ENCODE measurements at regions of chr9 and their contacts with region 1.

Region 1: DNA sequence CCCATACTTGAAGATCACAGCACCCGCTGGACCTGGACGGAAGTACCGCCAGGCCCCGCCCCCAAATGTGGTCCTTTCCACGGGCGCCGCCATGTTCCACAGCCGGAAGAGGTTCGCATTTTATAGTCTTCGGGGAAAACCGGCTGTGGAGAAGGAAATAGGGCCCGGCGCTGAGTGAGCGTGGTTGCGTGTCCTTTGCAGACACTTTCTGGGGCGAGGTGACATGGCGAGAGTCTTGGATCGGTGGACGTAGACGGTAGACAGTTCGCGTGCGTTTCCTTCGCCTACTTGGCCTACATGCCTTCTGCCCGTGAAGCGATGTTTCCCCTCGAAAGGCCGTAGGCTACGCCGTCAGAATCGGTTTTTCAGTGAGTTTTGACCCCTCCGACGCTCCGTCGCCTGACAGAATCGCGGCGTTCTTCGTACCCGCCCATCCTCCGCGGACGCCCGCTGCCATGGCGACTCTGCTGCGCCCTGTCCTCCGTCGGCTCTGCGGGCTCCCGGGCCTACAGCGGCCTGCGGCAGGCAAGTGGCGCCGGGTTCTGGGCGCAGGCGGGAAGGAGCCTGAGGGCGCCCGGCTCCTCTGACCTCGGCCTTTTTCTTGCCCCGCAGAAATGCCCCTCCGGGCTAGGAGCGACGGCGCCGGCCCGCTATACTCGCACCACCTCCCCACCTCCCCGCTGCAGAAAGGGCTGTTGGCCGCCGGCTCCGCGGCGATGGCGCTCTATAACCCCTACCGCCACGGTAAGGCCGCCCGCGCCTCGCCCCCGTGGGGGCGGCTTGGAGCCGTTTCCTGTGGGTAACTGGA is at the starts of genes COQ4 and TRUB2:
- H3K4me3 Mint-ChIP-seq: peak within 1 kb of the TSS; percentile 86
- H3K27ac Mint-ChIP-seq: peak within 1 kb of the TSS; percentile 90
- H3K4me1 Mint-ChIP-seq: peaks cover 7% of the 10 kb centered on the region
- H3K27me3 Mint-ChIP-seq: no peaks in the 10 kb centered on the region

Region 2: GRCh38 chr9:128275996-128276573 is 46.5 kb before region 1 on chr9 and contains the starts of genes GOLGA2 and SWI5:
- intact Hi-C with region 1: loop called (anchors 1 kb)
- H3K4me3 Mint-ChIP-seq: peak within 1 kb of the TSS; percentile 96
- H3K27ac Mint-ChIP-seq: peak within 1 kb of the TSS; percentile 96
- H3K4me1 Mint-ChIP-seq: peaks cover 51% of the 10 kb centered on the region
- H3K27me3 Mint-ChIP-seq: no peaks in the 10 kb centered on the region

Region 3: GRCh38 chr9:128339771-128340690 is 17.4 kb after region 1 on chr9 and contains the start of gene SLC27A4:
- intact Hi-C with region 1: loop called (anchors 1 kb)
- H3K4me3 Mint-ChIP-seq: peak within 1 kb of the TSS; percentile 94
- H3K27ac Mint-ChIP-seq: peak within 1 kb of the TSS; percentile 89
- H3K4me1 Mint-ChIP-seq: peaks cover 7% of the 10 kb centered on the region
- H3K27me3 Mint-ChIP-seq: no peaks in the 10 kb centered on the region

Region 4: GRCh38 chr9:128370826-128371621 is 48.4 kb after region 1 on chr9 and contains the start of gene URM1:
- intact Hi-C with region 1: loop called (anchors 1 kb)
- H3K4me3 Mint-ChIP-seq: peak within 1 kb of the TSS; percentile 92
- H3K27ac Mint-ChIP-seq: peak within 1 kb of the TSS; percentile 92
- H3K4me1 Mint-ChIP-seq: peaks cover 40% of the 10 kb centered on the region
- H3K27me3 Mint-ChIP-seq: no peaks in the 10 kb centered on the region

Region 5: DNA sequence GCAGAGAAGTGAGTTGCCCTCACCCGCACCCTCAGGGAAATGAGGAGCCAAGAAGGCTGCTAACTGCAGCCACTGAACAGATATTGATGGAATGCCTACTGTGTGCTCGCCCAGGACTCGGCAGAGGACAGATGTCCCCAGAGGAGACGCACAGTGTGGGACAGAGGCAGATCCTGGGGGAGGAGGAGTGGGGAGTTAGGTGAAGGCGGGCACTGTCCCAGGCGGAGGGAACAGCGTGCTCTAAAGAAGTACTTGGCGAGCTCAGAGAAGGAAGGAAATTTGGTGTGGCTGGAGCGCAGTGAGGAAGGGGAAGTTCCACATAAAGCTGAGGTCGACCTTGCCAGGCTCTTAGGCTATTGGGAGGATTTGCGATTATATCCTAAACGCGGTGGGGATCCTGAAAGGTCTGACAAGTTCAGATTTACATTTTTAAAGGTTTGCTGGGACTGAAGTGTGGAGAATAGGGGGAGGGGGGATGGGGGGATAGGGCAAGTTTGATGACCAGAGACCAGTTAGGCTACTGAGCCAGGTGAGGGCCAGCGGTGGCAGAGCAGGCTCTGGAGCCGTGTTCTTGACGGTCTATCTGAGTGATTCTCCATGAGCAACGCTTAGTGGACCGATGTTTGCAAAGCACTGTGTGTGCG is 74.5 kb after region 1 on chr9:
- intact Hi-C with region 1: no loop called
- H3K4me3 Mint-ChIP-seq: peak overlapping the region; percentile 10
- H3K27ac Mint-ChIP-seq: peak overlapping the region; percentile 14
- H3K4me1 Mint-ChIP-seq: peaks cover 16% of the 10 kb centered on the region
- H3K27me3 Mint-ChIP-seq: peaks cover 19% of the 10 kb centered on the region